CD4-positive, alpha-beta T cell (primary cell): ENCODE measurements at regions of chr17 and their contacts with region 1.

Region 1: DNA sequence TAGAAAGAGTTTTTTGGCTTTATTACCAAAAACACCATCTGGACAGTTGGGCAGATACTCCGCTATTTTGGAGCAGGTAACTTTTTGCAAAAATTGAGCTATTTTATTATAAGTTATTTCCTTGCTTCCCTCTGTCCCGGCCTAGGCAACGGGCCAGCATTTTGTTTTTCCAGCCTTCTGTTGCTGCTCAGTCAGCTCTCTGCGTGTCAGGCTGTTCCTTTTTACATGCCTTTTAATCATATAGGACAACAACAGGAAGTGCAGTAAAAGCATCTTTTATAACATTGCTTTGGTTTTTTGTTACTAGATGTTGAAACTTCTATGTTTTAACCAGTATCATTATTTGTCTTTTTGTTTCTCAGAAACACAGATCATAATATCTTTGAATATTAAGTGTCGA is 30.4 kb downstream of the PPM1D start:
- DNase-seq: no peak
- ATAC-seq: no peak
- H3K4me3 ChIP-seq: no peak overlapping the region
- H3K4me3 Mint-ChIP-seq: no peak overlapping the region
- H3K27ac ChIP-seq: no peak overlapping the region
- H3K27ac Mint-ChIP-seq: peak overlapping the region; percentile 75
- H3K4me1 ChIP-seq: no peaks in the 10 kb centered on the region
- H3K4me1 Mint-ChIP-seq: peaks cover 17% of the 10 kb centered on the region
- H3K27me3 ChIP-seq: no peaks in the 10 kb centered on the region
- H3K27me3 Mint-ChIP-seq: no peaks in the 10 kb centered on the region
- CTCF ChIP-seq: no peak

Region 2: DNA sequence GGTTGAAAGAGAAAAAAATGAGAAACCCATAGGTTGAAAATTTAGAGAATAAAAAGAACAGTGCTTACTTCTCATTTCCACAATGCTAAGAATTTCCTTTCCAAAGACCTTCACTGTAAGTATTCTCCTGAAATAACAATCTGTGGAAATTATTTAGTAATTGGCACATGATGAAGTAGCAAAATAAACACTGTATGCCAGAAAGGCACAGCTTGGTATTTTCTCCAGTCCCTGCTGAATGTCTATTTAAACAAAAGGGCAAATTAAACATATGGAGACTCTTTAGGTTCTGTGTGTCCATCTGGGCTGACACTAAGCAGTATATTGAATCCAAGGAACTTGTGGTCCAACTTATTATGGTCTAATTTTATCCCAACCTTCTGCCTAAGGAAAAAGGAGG is 162.0 kb before region 1 on chr17:
- CTCF ChIA-PET with region 1: no interaction called
- POLR2A ChIA-PET with region 1: no interaction called
- intact Hi-C with region 1: loop called in 1 of 2 experiments (anchors 10 kb)
- DNase-seq: no peak
- ATAC-seq: no peak
- H3K4me3 ChIP-seq: no peak overlapping the region
- H3K4me3 Mint-ChIP-seq: no peak overlapping the region
- H3K27ac ChIP-seq: no peak overlapping the region
- H3K27ac Mint-ChIP-seq: no peak overlapping the region
- H3K4me1 ChIP-seq: no peaks in the 10 kb centered on the region
- H3K4me1 Mint-ChIP-seq: peaks cover 10% of the 10 kb centered on the region
- H3K27me3 ChIP-seq: no peaks in the 10 kb centered on the region
- H3K27me3 Mint-ChIP-seq: no peaks in the 10 kb centered on the region
- CTCF ChIP-seq: no peak

Region 3: GRCh38 chr17:60646749-60647148 is 16.4 kb after region 1 on chr17:
- CTCF ChIA-PET with region 1: no interaction called
- POLR2A ChIA-PET with region 1: no interaction called
- intact Hi-C with region 1: loop called in 1 of 2 experiments (anchors 1 kb)
- DNase-seq: no peak
- ATAC-seq: no peak
- H3K4me3 ChIP-seq: no peak overlapping the region
- H3K4me3 Mint-ChIP-seq: no peak overlapping the region
- H3K27ac ChIP-seq: no peak overlapping the region
- H3K27ac Mint-ChIP-seq: no peak overlapping the region
- H3K4me1 ChIP-seq: no peaks in the 10 kb centered on the region
- H3K4me1 Mint-ChIP-seq: peaks cover 26% of the 10 kb centered on the region
- H3K27me3 ChIP-seq: no peaks in the 10 kb centered on the region
- H3K27me3 Mint-ChIP-seq: no peaks in the 10 kb centered on the region
- CTCF ChIP-seq: no peak